ENCODE measurements at regions of chr11 and their contacts with region 1.

Region 1: DNA sequence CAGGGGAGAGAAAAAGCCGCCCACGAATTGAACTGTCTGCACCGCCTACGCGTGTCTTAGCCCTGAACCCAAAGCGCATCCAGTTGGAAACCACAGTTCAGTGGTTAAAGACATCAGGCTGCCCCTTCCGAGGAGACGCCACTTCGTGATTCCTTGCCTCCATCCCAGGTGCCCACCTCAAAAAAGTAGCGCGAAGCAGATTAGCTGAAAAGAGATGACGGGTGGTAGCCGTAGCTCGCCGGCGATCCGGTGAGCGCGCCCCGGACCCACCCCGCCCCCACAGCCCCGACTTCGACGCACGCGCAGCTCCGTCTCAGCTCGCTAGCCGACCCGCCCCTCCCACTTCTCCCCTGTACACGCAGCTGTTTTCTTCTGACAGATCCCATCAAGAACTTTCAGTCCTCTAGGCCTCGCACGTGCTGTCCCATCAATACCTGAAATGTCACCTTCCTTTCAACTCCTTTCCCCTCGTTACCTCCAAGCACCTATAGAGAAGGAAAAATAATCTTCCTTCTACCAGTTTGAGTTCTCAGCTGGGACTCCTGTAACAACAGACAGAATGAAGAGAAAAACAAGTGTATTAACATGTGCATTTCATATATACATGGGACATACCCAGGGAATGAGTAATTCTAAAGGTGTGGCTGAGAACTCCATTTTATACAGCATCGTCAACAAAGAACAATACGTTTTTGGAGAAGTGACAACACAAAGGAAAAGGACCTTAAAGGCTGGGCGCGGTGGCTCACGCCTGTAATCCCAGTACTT is 49.5 kb downstream of the OR4D9 start:
- DNase-seq: peak; percentile 93
- ATAC-seq: peak; percentile 45
- H3K4me3 Mint-ChIP-seq: peak overlapping the region; percentile 93
- H3K27ac Mint-ChIP-seq: peak overlapping the region; percentile 96
- H3K4me1 Mint-ChIP-seq: peaks cover 41% of the 10 kb centered on the region
- H3K27me3 Mint-ChIP-seq: peaks cover 2% of the 10 kb centered on the region

Region 2: GRCh38 chr11:59545179-59546020 is 15.5 kb before region 1 on chr11:
- CTCF ChIA-PET with region 1: interaction called, 26 read pairs
- POLR2A ChIA-PET with region 1: interaction called, 4 read pairs
- intact Hi-C with region 1: loop called (anchors 1 kb)
- DNase-seq: no peak
- ATAC-seq: no peak
- H3K4me3 Mint-ChIP-seq: no peak overlapping the region
- H3K27ac Mint-ChIP-seq: no peak overlapping the region
- H3K4me1 Mint-ChIP-seq: peaks cover 20% of the 10 kb centered on the region
- H3K27me3 Mint-ChIP-seq: no peaks in the 10 kb centered on the region

Region 3: DNA sequence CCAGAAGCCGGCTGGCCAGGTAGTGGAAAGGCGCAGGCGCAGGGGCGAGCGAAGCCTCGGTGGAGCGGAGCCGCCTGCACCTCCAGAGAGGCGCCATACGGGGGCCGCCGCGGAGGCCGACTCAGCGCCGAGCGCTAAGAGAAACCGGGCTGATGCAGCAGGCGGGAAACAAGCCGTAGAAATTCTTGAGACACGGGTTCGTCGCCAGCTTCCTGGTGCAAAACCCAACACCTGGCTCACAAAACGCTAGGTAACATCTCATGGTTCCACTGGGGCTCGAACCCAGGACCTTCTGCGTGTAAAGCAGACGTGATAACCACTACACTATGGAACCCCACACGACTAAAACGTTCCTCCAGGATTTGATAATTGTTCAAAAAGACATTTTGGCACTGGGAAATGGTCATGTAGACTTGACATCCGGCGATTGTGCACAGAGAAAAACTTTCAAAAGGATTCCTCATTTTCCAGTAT is 10.5 kb before region 1 on chr11:
- CTCF ChIA-PET with region 1: interaction called, 22 read pairs
- POLR2A ChIA-PET with region 1: interaction called, 4 read pairs
- intact Hi-C with region 1: loop called (anchors 1 kb)
- DNase-seq: peak; percentile 95
- ATAC-seq: peak; percentile 91
- H3K4me3 Mint-ChIP-seq: peak overlapping the region; percentile 79
- H3K27ac Mint-ChIP-seq: peak overlapping the region; percentile 96
- H3K4me1 Mint-ChIP-seq: peaks cover 28% of the 10 kb centered on the region
- H3K27me3 Mint-ChIP-seq: peaks cover 2% of the 10 kb centered on the region

Region 4: DNA sequence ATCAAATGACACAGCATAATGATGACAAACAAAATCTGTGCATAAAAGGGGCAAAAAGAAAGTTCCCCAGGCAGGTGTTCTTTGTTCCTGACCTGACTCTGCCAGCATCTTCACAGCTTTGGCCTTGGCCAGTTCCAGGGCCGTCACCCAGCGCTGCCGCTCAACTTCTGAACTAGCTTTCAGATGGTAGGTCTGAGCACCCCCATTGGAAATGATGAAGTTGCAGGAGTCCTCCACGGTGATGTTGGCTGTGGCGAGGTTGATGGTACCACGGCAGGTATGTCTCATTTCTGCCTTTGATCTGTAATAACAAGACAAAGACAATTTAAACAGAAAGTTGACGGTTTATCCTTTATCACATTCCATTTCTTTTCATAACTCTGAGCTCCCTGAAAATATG is 49.4 kb after region 1 on chr11:
- CTCF ChIA-PET with region 1: interaction called, 6 read pairs
- POLR2A ChIA-PET with region 1: interaction called, 19 read pairs
- intact Hi-C with region 1: loop called in 1 of 2 experiments (anchors 1 kb)
- DNase-seq: peak; percentile 62
- ATAC-seq: peak; percentile 54
- H3K4me3 Mint-ChIP-seq: no peak overlapping the region
- H3K27ac Mint-ChIP-seq: peak overlapping the region; percentile 25
- H3K4me1 Mint-ChIP-seq: peaks cover 47% of the 10 kb centered on the region
- H3K27me3 Mint-ChIP-seq: no peaks in the 10 kb centered on the region

Region 5: DNA sequence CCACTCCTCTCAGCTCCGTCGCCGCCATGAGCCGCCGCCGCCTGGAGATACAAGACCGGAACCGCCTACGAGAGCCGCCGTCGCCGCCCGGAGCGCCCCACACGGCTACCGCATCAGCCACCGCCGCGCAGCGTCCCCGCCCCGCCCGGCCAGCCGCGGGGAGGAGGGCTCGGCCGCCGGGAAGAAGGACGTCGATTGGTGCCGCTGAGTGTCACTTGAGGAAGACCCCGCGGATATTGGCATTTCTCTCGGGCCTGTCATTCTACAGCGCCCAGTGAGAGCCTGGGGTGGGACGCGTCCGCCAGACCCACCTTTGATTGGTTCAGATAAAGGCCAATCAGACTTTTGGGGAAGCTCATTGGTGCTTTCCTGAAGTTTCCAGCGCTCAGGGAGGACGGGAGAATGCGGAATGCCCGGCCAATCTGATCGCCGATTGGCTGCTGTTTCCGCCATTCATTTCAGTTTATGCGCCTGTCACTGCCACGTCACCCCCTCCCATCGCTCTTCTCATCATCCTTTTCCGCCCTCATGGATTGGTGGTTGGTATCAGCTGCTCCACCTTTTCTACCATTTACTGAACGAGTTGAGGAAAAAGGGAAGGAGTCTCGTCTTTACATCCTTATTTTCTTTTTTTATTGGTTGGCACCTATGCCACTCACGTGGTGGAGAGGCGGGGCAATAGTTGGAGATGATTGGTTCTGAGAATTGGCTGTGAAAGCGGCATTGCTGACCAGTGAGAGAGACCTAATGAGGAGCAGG is 54.9 kb after region 1 on chr11 and contains the start of gene OSBP:
- CTCF ChIA-PET with region 1: interaction called, 6 read pairs
- POLR2A ChIA-PET with region 1: interaction called, 5 read pairs
- intact Hi-C with region 1: loop called in 1 of 2 experiments (anchors 1 kb)
- DNase-seq: peak; percentile 98
- ATAC-seq: peak; percentile 88
- H3K4me3 Mint-ChIP-seq: peak within 1 kb of the TSS; percentile 99
- H3K27ac Mint-ChIP-seq: peak within 1 kb of the TSS; percentile 96
- H3K4me1 Mint-ChIP-seq: peaks cover 40% of the 10 kb centered on the region
- H3K27me3 Mint-ChIP-seq: no peaks in the 10 kb centered on the region
- total RNA-seq, gene OSBP: 37.9 to 44.2 TPM

Region 6: GRCh38 chr11:59810189-59810910 is 249.5 kb after region 1 on chr11 and contains the start of gene MRPL16:
- CTCF ChIA-PET with region 1: no interaction called
- POLR2A ChIA-PET with region 1: interaction called, 3 read pairs
- intact Hi-C with region 1: loop called in 1 of 2 experiments (anchors 5 kb)
- DNase-seq: peak; percentile 94
- ATAC-seq: peak; percentile 99
- H3K4me3 Mint-ChIP-seq: peak within 1 kb of the TSS; percentile 88
- H3K27ac Mint-ChIP-seq: peak within 1 kb of the TSS; percentile 88
- H3K4me1 Mint-ChIP-seq: peaks cover 18% of the 10 kb centered on the region
- H3K27me3 Mint-ChIP-seq: no peaks in the 10 kb centered on the region
- total RNA-seq, gene MRPL16: 77.9 to 82.6 TPM